ENCODE measurements at regions of chr22 and their contacts with region 1.

Region 1: GRCh38 chr22:31943976-31944699 is at the start of gene YWHAH:
- DNase-seq: peak; percentile 88
- ATAC-seq: peak; percentile 72
- H3K4me3 ChIP-seq: peak within 1 kb of the TSS; percentile 100
- H3K27ac ChIP-seq: peak within 1 kb of the TSS; percentile 80
- H3K4me1 ChIP-seq: peaks cover 20% of the 10 kb centered on the region
- H3K27me3 ChIP-seq: no peaks in the 10 kb centered on the region
- CTCF ChIP-seq: no peak
- total RNA-seq, gene YWHAH: 75.0 and 95.7 TPM in 2 replicates

Region 2: DNA sequence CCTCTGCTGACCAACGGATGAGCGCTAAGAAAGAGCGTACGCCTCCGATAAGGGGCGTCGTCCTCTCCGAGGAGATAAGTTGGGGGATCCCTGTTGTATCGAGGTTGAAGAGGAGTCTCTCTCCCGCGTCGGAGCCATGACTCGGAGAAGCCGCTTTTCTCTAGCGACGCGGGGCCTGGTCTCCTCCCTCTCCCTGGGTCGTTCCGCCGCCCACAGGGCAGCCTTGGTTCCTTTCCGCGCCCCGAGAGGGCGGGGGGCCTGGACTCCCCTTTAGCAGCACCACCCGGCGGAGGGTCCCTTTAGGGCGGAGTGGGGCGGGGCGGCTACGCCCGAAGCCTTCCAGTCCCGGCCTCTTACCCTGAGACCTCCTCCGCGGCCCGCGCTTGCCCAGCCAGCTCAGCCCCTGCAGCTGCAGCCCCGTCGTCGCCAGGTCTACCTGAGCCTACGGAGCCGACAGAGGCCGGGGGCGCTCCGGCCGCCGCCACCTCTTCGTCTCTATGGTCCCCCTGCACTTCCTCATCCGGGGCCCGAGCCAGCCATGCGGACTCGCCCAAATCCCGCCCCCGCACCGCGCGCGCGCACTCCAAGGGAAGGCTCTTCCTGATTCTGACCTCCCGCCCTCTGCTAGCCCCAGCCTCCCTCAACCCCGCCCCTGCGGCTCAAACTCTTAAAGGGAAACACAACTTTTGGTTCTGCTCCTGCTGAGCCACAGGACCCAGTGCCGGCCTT is 194.3 kb before region 1 on chr22 and contains the start of gene PRR14L:
- CTCF ChIA-PET with region 1: no interaction called
- POLR2A ChIA-PET with region 1: no interaction called
- intact Hi-C with region 1: loop called (anchors 5 kb)
- DNase-seq: peak; percentile 90
- ATAC-seq: peak; percentile 63
- H3K4me3 ChIP-seq: peak within 1 kb of the TSS; percentile 100
- H3K27ac ChIP-seq: peak within 1 kb of the TSS; percentile 64
- H3K4me1 ChIP-seq: peaks cover 26% of the 10 kb centered on the region
- H3K27me3 ChIP-seq: no peaks in the 10 kb centered on the region
- CTCF ChIP-seq: no peak
- total RNA-seq, gene PRR14L: 9.3 and 17.9 TPM in 2 replicates

Region 3: DNA sequence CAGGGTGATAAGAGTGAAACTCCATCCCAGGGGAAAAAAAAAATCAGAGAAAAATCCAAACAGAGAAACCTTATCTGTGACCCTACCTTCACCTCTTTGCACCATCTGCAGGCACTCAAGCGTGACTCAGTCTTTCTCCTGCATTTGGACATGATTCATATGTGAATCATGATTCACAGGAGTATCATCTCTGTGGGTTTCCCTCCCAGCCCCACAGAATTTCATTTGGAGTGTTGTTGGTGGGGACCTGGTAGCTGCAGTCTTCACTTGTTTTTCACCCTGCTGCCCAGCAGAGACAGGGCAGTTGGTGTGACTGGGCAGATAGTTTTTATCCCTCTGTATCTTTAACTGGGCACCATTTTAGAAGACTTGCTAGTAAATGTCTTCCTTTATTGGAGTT is 114.6 kb before region 1 on chr22:
- CTCF ChIA-PET with region 1: no interaction called
- POLR2A ChIA-PET with region 1: no interaction called
- intact Hi-C with region 1: no loop called
- DNase-seq: peak; percentile 89
- ATAC-seq: peak; percentile 93
- H3K4me3 ChIP-seq: peak overlapping the region; percentile 31
- H3K27ac ChIP-seq: peak overlapping the region; percentile 88
- H3K4me1 ChIP-seq: peaks cover 23% of the 10 kb centered on the region
- H3K27me3 ChIP-seq: no peaks in the 10 kb centered on the region
- CTCF ChIP-seq: no peak

Region 4: DNA sequence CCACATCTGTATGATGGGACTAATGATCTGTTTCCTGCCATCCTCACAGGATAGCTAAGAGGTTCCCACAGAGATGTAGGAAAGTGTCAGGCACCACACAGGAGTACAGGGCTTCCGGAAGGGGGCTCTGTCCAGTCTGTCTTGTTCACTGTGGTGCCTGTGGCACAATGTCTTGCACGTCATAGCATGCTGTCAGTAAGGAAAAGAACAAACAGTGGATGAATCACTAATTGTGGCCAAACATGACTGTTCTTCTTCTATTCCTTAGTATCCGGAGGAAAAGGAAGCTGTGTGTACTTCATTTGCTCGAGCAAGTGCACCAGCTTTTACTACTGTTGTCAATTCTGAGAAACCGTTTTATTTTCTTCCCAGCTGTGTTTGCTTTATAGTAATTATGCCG is 73.2 kb before region 1 on chr22:
- CTCF ChIA-PET with region 1: interaction called, 6 read pairs
- POLR2A ChIA-PET with region 1: no interaction called
- intact Hi-C with region 1: loop called (anchors 2 kb)
- DNase-seq: peak; percentile 91
- ATAC-seq: peak; percentile 97
- H3K4me3 ChIP-seq: no peak overlapping the region
- H3K27ac ChIP-seq: peak overlapping the region; percentile 94
- H3K4me1 ChIP-seq: peaks cover 38% of the 10 kb centered on the region
- H3K27me3 ChIP-seq: no peaks in the 10 kb centered on the region
- CTCF ChIP-seq: peak; percentile 57

Region 5: GRCh38 chr22:31995046-31995445 is 50.9 kb after region 1 on chr22:
- CTCF ChIA-PET with region 1: no interaction called
- POLR2A ChIA-PET with region 1: no interaction called
- intact Hi-C with region 1: no loop called
- DNase-seq: peak; percentile 4
- ATAC-seq: no peak
- H3K4me3 ChIP-seq: no peak overlapping the region
- H3K27ac ChIP-seq: no peak overlapping the region
- H3K4me1 ChIP-seq: no peaks in the 10 kb centered on the region
- H3K27me3 ChIP-seq: peaks cover 6% of the 10 kb centered on the region; the same call in 1 of the 2 replicates
- CTCF ChIP-seq: 0 out of 2 replicates have a peak, but pooled peaks have one; percentile 37

Region 6: DNA sequence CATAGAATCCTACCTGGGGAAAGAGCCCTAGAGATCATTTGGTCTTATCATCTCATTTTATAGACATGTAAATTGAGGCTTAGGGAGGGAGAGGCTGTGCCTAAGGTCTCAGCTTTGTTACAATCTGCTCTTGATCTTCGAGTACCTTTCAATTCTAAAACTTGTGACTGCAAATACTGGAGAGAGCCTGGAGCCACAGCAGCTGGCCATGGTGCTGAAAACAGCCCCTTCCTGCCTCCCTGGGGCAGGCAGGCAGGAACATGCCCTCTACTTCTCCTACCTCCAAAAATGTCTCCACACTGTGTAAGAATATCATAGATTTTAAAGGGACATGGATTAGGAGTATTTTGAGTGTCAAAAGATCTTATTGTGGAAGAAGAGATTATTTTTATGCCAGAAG is 162.8 kb after region 1 on chr22:
- CTCF ChIA-PET with region 1: no interaction called
- POLR2A ChIA-PET with region 1: no interaction called
- intact Hi-C with region 1: no loop called
- DNase-seq: peak; percentile 36
- ATAC-seq: no peak
- H3K4me3 ChIP-seq: no peak overlapping the region
- H3K27ac ChIP-seq: no peak overlapping the region
- H3K4me1 ChIP-seq: no peaks in the 10 kb centered on the region
- H3K27me3 ChIP-seq: peaks cover 25% of the 10 kb centered on the region
- CTCF ChIP-seq: no peak